Activated CD4-positive, alpha-beta T cell treated with anti-CD3 and anti-CD28 coated beads, Interleukin-2, amount 10 ng/mL, durations not matched to agents 7 days and 5 days (primary cell): ENCODE measurements at regions of chr16 and their contacts with region 1.

Region 1: DNA sequence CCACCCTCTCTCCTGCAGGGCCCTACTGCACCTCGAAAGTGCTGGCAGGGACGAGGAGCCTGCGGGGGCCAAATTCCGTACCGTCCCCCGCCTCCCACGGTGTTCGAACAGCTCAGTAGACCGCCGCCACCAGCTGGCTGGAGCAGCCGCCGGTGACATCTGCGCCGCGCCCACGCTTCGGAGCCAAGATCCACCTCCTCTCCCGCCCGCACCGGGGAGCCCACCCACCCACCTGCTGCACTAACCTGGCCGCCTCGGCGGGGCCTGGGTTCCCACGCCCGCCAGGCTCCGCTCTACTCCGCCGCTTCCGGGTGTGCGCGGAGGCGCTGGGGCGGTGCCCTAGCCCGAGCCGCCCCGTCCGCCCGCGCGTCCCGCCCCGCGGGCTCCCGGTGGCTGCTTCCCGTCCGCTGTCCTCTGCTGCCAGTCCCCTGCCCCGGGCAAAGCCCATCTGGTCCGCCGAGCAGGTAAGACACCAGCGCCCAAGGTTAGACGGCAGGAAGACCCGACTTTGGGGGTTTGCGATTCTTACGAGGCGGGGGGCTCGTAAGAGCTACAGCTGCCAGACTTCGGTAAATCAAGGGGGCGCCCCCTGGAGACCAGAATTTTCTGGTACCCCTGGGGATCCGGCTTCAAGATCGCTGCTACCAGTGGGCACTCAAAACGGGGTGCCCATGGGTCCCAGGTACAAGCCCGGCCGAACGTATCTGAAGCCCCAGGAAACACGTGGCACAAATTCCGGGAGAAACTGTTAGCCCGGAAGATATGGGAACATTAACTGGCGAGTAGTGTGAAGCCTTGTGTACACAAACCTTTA is at the starts of genes FBXL8 and TRADD:
- DNase-seq: peak; percentile 81
- H3K4me3 Mint-ChIP-seq: peak within 1 kb of the TSS; percentile 93
- H3K27ac Mint-ChIP-seq: peak within 1 kb of the TSS; percentile 100
- H3K4me1 Mint-ChIP-seq: peaks cover 62% of the 10 kb centered on the region
- H3K27me3 Mint-ChIP-seq: peaks cover 14% of the 10 kb centered on the region
- total RNA-seq, gene FBXL8: 35.7 to 46.6 TPM
- total RNA-seq, gene TRADD: 47.2 to 57.5 TPM

Region 2: GRCh38 chr16:66970775-66971725 is 188.8 kb before region 1 on chr16:
- CTCF ChIA-PET with region 1: interaction called, 21 read pairs
- POLR2A ChIA-PET with region 1: no interaction called
- DNase-seq: no peak
- H3K4me3 Mint-ChIP-seq: no peak overlapping the region
- H3K27ac Mint-ChIP-seq: no peak overlapping the region
- H3K4me1 Mint-ChIP-seq: peaks cover 15% of the 10 kb centered on the region
- H3K27me3 Mint-ChIP-seq: no peaks in the 10 kb centered on the region

Region 3: GRCh38 chr16:66984892-66985311 is 174.9 kb before region 1 on chr16:
- CTCF ChIA-PET with region 1: interaction called, 16 read pairs
- POLR2A ChIA-PET with region 1: no interaction called
- DNase-seq: peak; percentile 64
- H3K4me3 Mint-ChIP-seq: peak overlapping the region; percentile 1
- H3K27ac Mint-ChIP-seq: peak overlapping the region; percentile 96
- H3K4me1 Mint-ChIP-seq: peaks cover 70% of the 10 kb centered on the region
- H3K27me3 Mint-ChIP-seq: no peaks in the 10 kb centered on the region

Region 4: DNA sequence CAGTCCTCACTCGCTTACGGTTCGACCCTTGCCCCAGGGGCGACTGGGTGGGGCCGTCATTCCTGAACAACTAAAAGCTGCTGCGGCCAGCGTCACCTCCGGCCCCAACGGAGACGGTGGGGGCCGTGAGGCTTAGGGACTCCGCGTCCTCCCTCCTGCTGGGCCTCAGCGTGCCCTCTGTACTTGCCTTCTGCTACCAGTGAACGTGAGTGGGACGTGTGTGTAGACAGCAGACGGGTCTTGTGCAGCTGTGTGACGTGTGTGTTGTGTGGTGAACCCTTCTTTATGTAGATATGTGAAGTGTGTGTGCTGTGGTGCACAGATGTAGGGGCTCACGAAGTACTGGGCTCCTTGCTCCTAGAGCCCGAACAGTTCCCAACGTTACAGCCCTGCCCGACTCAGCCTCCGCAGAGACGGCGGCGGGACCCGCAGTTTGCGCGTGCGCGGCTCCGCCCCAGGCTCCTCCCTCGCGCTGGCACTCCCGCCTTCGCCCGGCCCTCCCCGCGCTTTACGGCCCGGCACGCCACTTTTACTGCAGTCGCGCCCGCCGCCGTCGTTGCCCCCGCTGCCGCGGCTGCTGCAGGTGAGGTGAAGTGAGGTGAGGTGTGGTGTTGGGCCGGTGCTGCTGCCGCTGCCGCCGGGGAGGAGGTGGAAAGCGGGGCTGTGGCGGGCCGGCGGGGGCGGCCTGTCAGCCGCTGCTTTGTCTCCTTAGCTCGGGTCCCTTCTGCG is 50.2 kb before region 1 on chr16 and contains the start of gene PHAF1:
- CTCF ChIA-PET with region 1: interaction called, 20 read pairs
- POLR2A ChIA-PET with region 1: no interaction called
- DNase-seq: peak; percentile 94
- H3K4me3 Mint-ChIP-seq: peak within 1 kb of the TSS; percentile 95
- H3K27ac Mint-ChIP-seq: peak within 1 kb of the TSS; percentile 76
- H3K4me1 Mint-ChIP-seq: peaks cover 34% of the 10 kb centered on the region
- H3K27me3 Mint-ChIP-seq: no peaks in the 10 kb centered on the region
- total RNA-seq, gene PHAF1: 15.2 to 19.0 TPM

Region 5: GRCh38 chr16:67173808-67174705 is 14.3 kb after region 1 on chr16:
- CTCF ChIA-PET with region 1: interaction called, 137 read pairs
- POLR2A ChIA-PET with region 1: no interaction called
- DNase-seq: peak; percentile 73
- H3K4me3 Mint-ChIP-seq: peak overlapping the region; percentile 73
- H3K27ac Mint-ChIP-seq: peak overlapping the region; percentile 71
- H3K4me1 Mint-ChIP-seq: peaks cover 60% of the 10 kb centered on the region
- H3K27me3 Mint-ChIP-seq: peaks cover 44% of the 10 kb centered on the region

Region 6: GRCh38 chr16:67190448-67191399 is 30.9 kb after region 1 on chr16:
- CTCF ChIA-PET with region 1: interaction called, 30 read pairs
- POLR2A ChIA-PET with region 1: no interaction called
- DNase-seq: no peak
- H3K4me3 Mint-ChIP-seq: no peak overlapping the region
- H3K27ac Mint-ChIP-seq: no peak overlapping the region
- H3K4me1 Mint-ChIP-seq: peaks cover 38% of the 10 kb centered on the region
- H3K27me3 Mint-ChIP-seq: peaks cover under 1% of the 10 kb centered on the region

Region 7: DNA sequence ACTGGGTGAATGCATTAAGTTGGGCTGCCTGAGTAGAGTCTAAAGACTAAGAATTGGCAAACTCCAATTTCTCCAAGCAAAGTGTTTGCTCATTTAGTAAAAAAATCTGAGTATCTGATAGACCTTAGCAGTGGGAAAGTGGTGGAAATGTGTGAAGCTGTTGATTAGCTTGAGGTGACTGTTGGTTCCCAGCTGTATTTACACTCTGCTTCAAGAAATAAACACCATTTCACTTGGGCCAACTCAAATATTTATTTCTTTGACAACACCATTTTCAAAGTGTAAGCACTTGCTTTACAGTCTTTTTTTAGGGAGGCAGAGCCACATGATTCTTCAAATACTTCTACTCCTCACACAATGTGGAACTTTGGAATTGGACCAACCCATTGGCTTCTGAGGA is 158.1 kb after region 1 on chr16:
- CTCF ChIA-PET with region 1: no interaction called
- POLR2A ChIA-PET with region 1: no interaction called
- DNase-seq: no peak
- H3K4me3 Mint-ChIP-seq: no peak overlapping the region
- H3K27ac Mint-ChIP-seq: no peak overlapping the region
- H3K4me1 Mint-ChIP-seq: no peaks in the 10 kb centered on the region
- H3K27me3 Mint-ChIP-seq: peaks cover 16% of the 10 kb centered on the region